ENCODE measurements at regions of chr17 and their contacts with region 1.

Region 1: DNA sequence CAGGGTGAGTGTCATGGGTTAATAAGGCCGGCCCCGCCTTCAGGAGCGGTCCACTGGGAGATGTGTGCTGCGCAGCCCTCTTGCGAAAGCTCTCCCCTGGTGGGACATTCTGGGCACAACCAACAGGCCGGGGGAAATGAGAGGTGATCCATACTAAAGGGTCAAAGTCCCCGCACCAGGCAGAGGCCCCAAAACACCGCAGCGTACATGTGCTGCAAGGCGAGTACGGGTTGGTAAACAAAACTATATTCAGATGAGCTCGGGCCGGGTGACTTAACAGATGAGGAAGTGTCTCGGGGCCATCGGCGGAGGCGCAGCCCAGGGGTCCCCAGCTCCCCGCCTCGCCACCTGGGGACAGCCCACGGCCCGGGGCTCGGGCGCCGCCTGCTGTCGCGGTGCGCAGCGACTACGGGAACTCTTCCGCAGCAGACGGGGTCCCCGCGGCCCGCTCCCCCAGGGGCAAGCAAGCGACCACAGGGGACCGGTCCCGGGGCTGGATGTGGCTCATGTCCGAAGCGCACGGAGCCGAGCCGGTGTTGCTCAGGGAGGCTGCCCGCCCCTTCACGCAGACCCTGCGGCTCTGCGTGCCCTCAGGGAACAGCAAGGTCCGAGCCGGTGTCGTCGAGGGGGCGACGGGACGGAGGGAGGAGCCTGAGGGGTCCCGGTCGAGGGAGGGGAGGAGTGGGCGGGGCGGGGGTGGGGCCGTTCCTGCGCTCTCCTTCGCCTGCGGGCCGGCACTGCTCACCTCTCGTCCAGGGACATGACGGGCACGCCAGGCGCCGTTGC is at the start of gene RAB37:
- DNase-seq: no peak
- H3K4me3 Mint-ChIP-seq: peak within 1 kb of the TSS; percentile 75
- H3K27ac Mint-ChIP-seq: peak within 1 kb of the TSS; percentile 77
- H3K4me1 Mint-ChIP-seq: peaks cover 42% of the 10 kb centered on the region
- H3K27me3 Mint-ChIP-seq: no peaks in the 10 kb centered on the region
- total RNA-seq, gene RAB37: 2.1 to 2.3 TPM

Region 2: DNA sequence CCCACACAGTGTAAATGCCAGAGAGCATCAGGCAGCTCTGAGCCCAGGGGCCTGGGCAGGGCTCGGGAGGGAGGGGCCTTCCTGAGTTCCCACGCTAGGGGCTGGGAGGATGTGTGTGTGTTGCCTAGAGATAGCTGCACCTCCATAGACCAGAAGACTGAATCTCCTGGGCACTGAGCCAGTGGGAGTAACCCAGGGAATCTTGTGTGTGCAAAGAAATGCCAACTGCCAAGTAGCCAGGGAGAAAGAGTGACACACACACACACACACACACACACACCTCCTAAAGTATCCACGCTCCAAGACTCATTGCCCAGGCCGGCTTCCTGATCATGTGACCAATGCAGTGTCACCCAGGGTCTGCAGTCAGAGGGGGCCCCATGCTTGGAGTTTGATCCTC is 699.4 kb before region 1 on chr17:
- CTCF ChIA-PET with region 1: no interaction called
- intact Hi-C with region 1: no loop called
- DNase-seq: no peak
- H3K4me3 Mint-ChIP-seq: no peak overlapping the region
- H3K27ac Mint-ChIP-seq: no peak overlapping the region
- H3K4me1 Mint-ChIP-seq: no peaks in the 10 kb centered on the region
- H3K27me3 Mint-ChIP-seq: no peaks in the 10 kb centered on the region

Region 3: DNA sequence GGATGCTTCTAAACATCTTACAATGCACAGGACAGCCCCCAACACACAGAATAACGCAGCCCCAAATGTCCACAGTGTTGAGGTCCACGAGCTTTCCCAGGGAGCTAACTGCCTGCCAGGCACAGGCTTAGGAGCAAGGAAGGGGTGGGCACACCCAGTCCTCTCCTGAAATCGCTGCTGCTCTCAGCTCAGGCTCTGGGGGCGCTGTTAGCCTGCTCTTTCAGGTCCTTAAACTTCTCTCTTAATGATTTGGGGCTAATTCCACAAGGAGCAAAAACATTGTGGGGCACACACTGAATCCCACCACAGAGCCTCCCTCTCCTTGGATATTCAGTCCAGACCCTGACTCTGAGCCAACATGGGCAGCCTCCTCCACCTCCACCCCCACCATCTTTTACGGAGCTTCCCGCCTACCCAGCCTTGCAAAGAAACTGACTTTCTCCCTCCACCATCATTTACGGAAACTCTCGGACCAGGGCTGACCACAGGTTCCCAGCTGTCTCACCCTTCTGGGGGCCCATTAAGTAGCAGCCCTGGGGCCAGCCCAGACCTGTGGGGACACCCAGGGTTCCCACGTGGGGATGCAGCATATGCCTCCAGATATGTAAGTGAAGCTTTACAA is 170.5 kb before region 1 on chr17:
- CTCF ChIA-PET with region 1: no interaction called
- intact Hi-C with region 1: loop called (anchors 5 kb)
- DNase-seq: peak; percentile 61
- H3K4me3 Mint-ChIP-seq: no peak overlapping the region
- H3K27ac Mint-ChIP-seq: no peak overlapping the region
- H3K4me1 Mint-ChIP-seq: peaks cover 18% of the 10 kb centered on the region
- H3K27me3 Mint-ChIP-seq: peaks cover 23% of the 10 kb centered on the region

Region 4: GRCh38 chr17:74654742-74655141 is 82.0 kb before region 1 on chr17:
- CTCF ChIA-PET with region 1: interaction called, 102 read pairs
- intact Hi-C with region 1: loop called (anchors 1 kb)
- DNase-seq: no peak
- H3K4me3 Mint-ChIP-seq: no peak overlapping the region
- H3K27ac Mint-ChIP-seq: no peak overlapping the region
- H3K4me1 Mint-ChIP-seq: peaks cover 3% of the 10 kb centered on the region
- H3K27me3 Mint-ChIP-seq: peaks cover 3% of the 10 kb centered on the region

Region 5: GRCh38 chr17:74659898-74660297 is 76.8 kb before region 1 on chr17:
- CTCF ChIA-PET with region 1: interaction called, 102 read pairs
- intact Hi-C with region 1: loop called (anchors 1 kb)
- DNase-seq: no peak
- H3K4me3 Mint-ChIP-seq: no peak overlapping the region
- H3K27ac Mint-ChIP-seq: no peak overlapping the region
- H3K4me1 Mint-ChIP-seq: peaks cover 3% of the 10 kb centered on the region
- H3K27me3 Mint-ChIP-seq: peaks cover 20% of the 10 kb centered on the region

Region 6: DNA sequence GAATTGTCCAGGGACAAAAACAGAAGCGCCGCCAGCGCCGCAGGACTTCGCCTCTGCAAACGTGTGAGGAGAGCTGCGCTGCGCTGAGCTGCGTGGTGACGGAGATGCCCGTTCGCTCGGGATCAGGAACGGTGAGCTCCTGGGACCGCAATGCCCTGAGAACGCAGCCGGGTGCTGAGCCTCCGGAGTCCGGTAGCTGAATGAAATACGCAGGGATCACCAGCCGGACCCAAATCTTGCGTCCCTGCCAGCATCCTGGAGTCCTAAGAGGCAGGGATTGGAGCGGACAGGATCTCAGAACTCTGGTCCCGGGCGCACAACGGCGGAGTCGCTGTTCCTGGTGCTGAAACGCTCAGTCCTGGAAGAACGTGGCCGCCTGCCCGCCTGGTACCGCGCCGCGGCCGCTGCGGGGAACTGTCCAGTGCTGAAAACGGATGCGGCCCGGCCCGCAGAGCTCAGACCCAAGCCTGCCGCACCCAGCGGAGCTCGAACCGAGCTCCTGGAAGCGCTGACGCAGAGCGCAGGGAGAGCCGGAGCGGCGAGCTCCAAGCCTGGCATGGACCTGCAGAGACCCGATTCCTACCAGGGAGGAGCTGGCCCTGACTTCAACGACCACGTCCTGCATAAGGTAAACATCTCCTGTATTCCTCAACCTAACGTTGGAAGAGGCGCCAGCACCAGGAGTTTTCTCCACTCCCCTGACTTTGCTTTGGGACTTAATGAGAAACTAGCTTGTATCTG is 65.5 kb before region 1 on chr17:
- CTCF ChIA-PET with region 1: interaction called, 12 read pairs
- intact Hi-C with region 1: loop called (anchors 5 kb)
- DNase-seq: peak; percentile 90
- H3K4me3 Mint-ChIP-seq: no peak overlapping the region
- H3K27ac Mint-ChIP-seq: no peak overlapping the region
- H3K4me1 Mint-ChIP-seq: no peaks in the 10 kb centered on the region
- H3K27me3 Mint-ChIP-seq: peaks cover 35% of the 10 kb centered on the region

Region 7: DNA sequence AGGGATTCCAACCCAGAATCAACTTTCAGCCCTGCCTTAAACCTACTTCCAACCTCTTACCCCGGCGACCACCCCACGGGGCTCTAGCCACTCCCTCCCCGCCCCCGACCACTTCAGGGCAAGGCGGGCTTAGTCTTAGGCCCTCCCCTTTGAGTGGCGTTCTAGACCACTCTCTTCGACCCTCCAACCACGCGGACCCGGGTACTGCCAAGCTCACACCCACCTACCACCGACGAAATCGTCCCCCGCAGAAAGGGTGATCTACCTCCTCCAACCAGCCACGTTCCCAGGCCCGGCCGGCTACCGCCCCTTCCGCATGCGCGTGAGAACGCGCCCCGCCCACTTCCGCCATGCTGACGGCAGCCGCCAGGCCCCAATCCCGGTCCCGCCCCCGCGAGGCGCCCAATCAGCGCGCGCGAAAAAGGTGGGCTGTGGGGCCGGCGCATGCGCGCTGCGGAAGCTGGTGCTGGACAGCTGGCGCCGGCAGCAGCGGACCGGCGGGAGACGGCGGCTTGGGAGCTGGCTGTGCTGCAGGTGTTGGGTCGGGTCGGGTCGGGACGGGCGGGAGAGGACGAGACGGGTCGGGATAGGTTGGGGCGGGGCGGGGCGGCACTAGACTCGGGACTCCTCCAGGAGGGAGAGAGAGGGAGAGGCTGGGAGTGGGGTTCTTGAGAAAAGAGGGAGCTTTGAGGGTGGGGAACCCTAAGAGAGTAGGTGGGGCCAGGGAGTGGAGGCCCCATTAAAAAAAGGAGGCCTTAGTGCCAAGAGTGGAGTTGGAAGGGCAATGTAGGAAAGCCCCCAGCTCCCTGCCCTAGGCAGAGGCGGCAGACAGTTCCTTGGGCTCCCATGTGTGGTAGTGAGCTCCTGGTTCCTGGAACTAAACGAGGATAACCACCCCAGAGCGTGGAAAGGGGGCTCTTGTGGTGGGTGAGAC is 39.6 kb after region 1 on chr17 and contains the start of gene NAT9:
- CTCF ChIA-PET with region 1: interaction called, 16 read pairs
- intact Hi-C with region 1: no loop called
- DNase-seq: peak; percentile 98
- H3K4me3 Mint-ChIP-seq: peak within 1 kb of the TSS; percentile 100
- H3K27ac Mint-ChIP-seq: peak within 1 kb of the TSS; percentile 89
- H3K4me1 Mint-ChIP-seq: peaks cover 62% of the 10 kb centered on the region
- H3K27me3 Mint-ChIP-seq: no peaks in the 10 kb centered on the region
- total RNA-seq, gene NAT9: 42.1 to 43.9 TPM

Region 8: DNA sequence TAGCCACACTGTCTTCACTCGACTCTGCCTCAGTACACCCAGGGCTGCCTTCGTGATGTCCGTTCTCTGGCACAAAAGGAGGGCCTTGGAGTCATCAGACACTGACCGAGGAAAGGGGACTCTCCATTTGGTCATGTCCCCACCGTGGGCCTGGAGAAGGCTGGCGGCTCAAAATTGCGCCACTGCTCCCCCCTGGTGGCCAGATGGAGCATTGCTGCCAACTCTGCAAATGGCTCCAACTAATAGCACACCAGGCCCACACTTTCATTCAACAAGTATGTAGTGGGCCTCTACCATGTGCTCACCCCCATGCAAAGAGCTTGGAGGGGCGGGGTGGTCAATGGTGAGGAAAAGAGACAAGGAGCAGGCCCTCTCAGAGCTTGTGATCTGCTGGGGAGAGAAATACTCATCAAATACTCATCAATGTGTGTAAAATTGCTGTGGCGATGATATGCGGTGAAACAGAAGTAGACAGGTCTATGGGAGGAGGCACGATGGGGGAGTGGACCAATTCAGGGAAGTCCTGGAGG is 128.2 kb after region 1 on chr17:
- CTCF ChIA-PET with region 1: interaction called, 10 read pairs
- intact Hi-C with region 1: no loop called
- DNase-seq: peak; percentile 78
- H3K4me3 Mint-ChIP-seq: no peak overlapping the region
- H3K27ac Mint-ChIP-seq: no peak overlapping the region
- H3K4me1 Mint-ChIP-seq: peaks cover 15% of the 10 kb centered on the region
- H3K27me3 Mint-ChIP-seq: peaks cover 18% of the 10 kb centered on the region

Measured in activated naive CD4-positive, alpha-beta T cell treated with anti-CD3 and anti-CD28 coated beads for 36 hours (primary cell).